ENCODE measurements at regions of chr2 and their contacts with region 1.

Region 1: DNA sequence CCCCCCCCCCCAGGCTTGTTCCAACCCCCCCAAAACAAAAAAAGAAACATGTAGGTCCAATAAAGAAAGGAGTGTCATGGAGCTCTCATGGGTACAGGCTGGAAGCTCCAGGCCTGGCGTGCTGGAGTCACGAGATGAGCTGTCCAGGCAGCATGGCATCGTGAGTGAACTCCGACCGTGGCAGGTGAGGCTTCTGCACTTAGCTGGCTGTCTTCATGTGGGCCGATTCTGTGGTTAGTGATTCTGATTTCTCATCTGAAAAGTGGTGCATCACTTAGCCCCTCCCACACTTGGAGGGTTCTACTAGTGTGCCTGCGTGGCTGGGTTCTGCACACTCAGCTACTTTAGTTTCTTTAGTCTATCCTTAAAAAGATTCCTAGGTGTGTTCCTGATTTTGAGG is 126.4 kb upstream of the MGAT5 start:
- DNase-seq: no peak
- ATAC-seq: no peak
- H3K4me3 ChIP-seq: no peak overlapping the region
- H3K27ac ChIP-seq: no peak overlapping the region
- H3K4me1 ChIP-seq: peaks cover 28% of the 10 kb centered on the region
- H3K27me3 ChIP-seq: no peaks in the 10 kb centered on the region
- CTCF ChIP-seq: no peak
- POLR2A ChIP-seq: no peak
- RAD21 ChIP-seq: no peak

Region 2: DNA sequence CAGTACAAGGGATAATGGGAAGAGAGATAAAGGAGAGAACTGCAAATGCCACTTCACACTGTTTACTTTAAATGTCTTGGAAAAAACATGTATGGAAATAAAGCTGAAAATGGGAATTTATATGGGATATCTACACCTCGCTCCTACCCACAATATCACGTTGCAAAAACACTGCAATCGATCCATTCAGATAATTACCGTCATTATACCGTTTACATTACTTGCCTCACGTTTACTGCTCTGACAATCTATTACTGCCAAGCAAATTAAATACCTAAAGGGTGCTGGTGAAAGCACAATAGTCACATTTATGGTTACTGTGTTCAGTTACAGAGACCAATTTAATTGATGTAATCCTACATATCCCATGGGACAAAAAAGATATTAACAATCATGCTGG is 1242.8 kb before region 1 on chr2:
- CTCF ChIA-PET with region 1: no interaction called
- POLR2A ChIA-PET with region 1: no interaction called
- dilution Hi-C with region 1: no loop called
- in situ Hi-C with region 1: no loop called
- intact Hi-C with region 1: no loop called
- DNase-seq: no peak
- ATAC-seq: no peak
- H3K4me3 ChIP-seq: no peak overlapping the region
- H3K27ac ChIP-seq: no peak overlapping the region
- H3K4me1 ChIP-seq: peaks cover 1% of the 10 kb centered on the region; the same call in 1 of the 2 replicates
- H3K27me3 ChIP-seq: no peaks in the 10 kb centered on the region
- CTCF ChIP-seq: no peak
- POLR2A ChIP-seq: no peak
- RAD21 ChIP-seq: no peak

Region 3: GRCh38 chr2:133705287-133705686 is 422.2 kb before region 1 on chr2:
- CTCF ChIA-PET with region 1: no interaction called
- POLR2A ChIA-PET with region 1: no interaction called
- dilution Hi-C with region 1: no loop called
- in situ Hi-C with region 1: no loop called
- intact Hi-C with region 1: no loop called
- DNase-seq: no peak
- ATAC-seq: no peak; the same call in 1 of the 2 replicates
- H3K4me3 ChIP-seq: no peak overlapping the region
- H3K27ac ChIP-seq: no peak overlapping the region
- H3K4me1 ChIP-seq: no peaks in the 10 kb centered on the region
- H3K27me3 ChIP-seq: no peaks in the 10 kb centered on the region
- CTCF ChIP-seq: no peak
- POLR2A ChIP-seq: no peak
- RAD21 ChIP-seq: no peak

Region 4: DNA sequence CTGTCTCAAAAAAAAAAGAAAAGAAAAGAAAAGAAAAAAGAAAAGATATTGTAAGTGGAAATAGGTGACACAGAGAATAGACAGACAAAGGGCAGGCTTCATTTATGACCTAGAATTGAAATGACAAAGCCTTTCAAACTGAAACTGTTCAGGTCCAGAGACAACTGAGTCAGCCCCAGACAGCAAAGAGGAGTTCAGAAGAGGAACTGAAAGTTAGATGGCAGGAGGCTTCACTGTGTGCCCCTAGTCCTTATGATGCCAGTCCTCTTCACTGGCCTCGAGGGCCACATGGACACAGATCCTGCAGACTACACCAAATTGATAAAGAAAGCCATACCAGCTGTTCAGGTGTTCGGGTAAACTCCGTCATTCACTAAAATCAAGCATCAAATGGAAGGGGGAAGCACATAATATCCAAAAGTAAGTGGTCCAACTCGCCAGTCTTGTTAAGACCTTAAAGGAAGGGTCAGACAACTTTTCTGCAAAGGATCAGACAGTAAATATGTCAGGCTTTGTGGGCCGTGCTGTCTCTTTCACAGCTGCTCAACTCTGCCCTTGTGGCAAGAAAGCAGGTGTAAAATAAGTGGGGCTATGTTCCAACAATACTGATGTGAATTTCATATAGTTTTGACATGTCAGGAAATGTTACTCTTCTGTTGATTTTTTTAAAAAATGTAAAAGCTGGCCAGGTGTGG is 105.5 kb before region 1 on chr2:
- CTCF ChIA-PET with region 1: no interaction called
- POLR2A ChIA-PET with region 1: no interaction called
- dilution Hi-C with region 1: no loop called
- in situ Hi-C with region 1: no loop called
- intact Hi-C with region 1: no loop called
- DNase-seq: no peak
- ATAC-seq: no peak
- H3K4me3 ChIP-seq: no peak overlapping the region
- H3K27ac ChIP-seq: no peak overlapping the region
- H3K4me1 ChIP-seq: peaks cover 4% of the 10 kb centered on the region
- H3K27me3 ChIP-seq: no peaks in the 10 kb centered on the region
- CTCF ChIP-seq: no peak
- POLR2A ChIP-seq: no peak
- RAD21 ChIP-seq: no peak

Region 5: GRCh38 chr2:134039912-134040581 is 87.4 kb before region 1 on chr2:
- CTCF ChIA-PET with region 1: no interaction called
- POLR2A ChIA-PET with region 1: no interaction called
- dilution Hi-C with region 1: no loop called
- in situ Hi-C with region 1: no loop called
- intact Hi-C with region 1: no loop called
- DNase-seq: no peak
- ATAC-seq: no peak
- H3K4me3 ChIP-seq: no peak overlapping the region
- H3K27ac ChIP-seq: no peak overlapping the region
- H3K4me1 ChIP-seq: no peaks in the 10 kb centered on the region
- H3K27me3 ChIP-seq: peaks cover 5% of the 10 kb centered on the region; the same call in 1 of the 2 replicates
- CTCF ChIP-seq: no peak
- POLR2A ChIP-seq: no peak
- RAD21 ChIP-seq: no peak

Region 6: DNA sequence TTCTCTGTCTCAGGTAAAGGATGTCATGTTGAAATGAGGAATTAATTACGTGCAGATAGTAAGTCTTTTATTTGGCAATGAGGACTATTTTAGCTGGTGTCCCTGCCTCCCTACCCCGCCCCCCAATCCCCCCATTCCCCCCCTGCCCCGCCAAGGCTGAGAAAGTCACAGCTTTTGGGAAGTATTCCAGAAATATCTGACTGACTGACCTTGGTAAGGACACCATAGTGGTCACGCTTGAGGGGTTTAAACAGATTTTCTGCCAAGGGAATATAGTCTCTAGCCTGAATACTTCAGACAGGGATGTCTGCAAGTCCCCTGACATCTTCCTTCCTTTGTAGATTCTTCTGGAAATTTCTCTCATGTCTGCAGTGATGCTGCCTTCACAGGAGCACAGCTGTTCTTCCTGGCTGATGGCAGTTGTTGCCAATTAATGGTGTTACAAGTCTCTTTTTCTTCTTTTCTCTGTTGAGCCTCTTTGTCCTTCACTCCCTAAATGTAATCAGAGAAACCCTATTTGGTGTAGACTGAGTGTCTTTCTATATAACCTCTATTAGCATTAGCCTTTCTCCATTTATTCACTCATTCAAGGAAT is 72.6 kb after region 1 on chr2:
- CTCF ChIA-PET with region 1: no interaction called
- POLR2A ChIA-PET with region 1: interaction called, 12 read pairs
- dilution Hi-C with region 1: no loop called
- in situ Hi-C with region 1: no loop called
- intact Hi-C with region 1: no loop called
- DNase-seq: no peak
- ATAC-seq: no peak
- H3K4me3 ChIP-seq: no peak overlapping the region
- H3K27ac ChIP-seq: no peak overlapping the region
- H3K4me1 ChIP-seq: peaks cover 15% of the 10 kb centered on the region
- H3K27me3 ChIP-seq: no peaks in the 10 kb centered on the region
- CTCF ChIP-seq: no peak
- POLR2A ChIP-seq: no peak
- RAD21 ChIP-seq: no peak

Measured in IMR-90 (cell line).